GM23248 (cell line): ENCODE measurements at regions of chr19 and their contacts with region 1.

Region 1: DNA sequence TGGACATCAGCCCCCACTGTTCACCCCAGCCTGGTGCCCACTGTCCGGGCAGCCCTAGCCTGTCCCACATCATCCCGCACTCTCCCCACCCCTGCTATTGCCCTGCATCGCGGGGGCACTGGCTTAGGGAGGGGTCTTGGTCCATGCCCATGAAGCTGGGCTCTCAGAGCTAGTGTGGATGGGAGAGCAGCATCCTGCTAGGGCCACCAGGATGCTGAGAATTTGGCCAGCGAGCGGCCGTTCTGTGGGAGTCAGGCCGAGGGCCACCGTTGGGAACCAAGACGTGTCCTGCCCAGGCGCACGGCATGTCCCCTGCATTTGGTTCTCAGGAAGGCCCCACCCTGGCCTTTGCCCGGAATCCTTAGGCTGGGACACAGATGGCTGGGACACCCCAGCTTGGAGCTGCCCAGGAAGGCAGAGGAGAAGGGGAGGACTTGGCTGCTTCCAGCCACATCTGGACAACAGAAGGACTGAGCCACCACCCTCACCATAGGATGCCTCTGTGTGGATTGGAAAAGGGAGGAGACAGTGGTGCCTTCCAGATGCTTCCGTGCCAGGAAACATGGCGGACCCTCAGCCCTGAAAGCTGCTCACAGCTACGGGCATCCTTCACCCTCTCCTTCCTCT is 14.6 kb downstream of the ADGRE5 start:
- DNase-seq: no peak
- H3K4me3 ChIP-seq: no peak overlapping the region
- H3K27ac ChIP-seq: no peak overlapping the region
- H3K4me1 ChIP-seq: no peaks in the 10 kb centered on the region
- H3K27me3 ChIP-seq: no peaks in the 10 kb centered on the region

Region 2: GRCh38 chr19:14769201-14769600 is 373.4 kb after region 1 on chr19:
- in situ Hi-C with region 1: loop called (anchors 5 kb)
- DNase-seq: no peak
- H3K4me3 ChIP-seq: no peak overlapping the region
- H3K27ac ChIP-seq: no peak overlapping the region
- H3K4me1 ChIP-seq: no peaks in the 10 kb centered on the region
- H3K27me3 ChIP-seq: no peaks in the 10 kb centered on the region